Psoas muscle (tissue), 8 donors: ENCODE measurements at regions of chr10 and their contacts with region 1.

Region 1: DNA sequence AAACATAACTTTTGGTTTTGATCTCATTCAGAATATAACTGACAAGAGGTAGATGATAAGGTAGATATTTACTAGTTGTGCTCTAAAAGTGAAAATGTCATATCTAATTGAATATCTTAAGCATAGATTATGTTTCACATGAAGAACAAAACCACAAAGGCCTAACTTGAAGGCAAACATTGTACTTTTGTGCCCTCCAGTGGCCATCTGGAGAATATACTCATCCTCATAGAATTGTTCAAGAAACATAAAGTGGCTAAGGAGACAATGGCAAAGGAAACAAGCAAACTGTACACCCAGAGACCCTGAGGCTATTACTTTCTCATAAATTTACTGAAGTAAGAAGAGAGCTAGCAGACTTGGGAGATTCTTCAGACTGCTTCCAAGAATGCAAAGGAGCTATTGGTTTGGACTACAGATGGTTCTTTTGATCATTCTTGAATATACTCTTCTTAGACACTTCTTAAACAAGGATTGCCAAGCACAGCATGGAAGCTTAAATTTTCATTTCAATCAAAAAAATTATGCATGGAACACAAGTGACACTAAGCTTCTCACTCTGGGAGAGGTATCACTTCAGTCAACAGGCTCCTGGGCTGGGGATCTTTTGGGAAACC is 98.2 kb upstream of the DKK1 start:
- DNase-seq: no peak
- ATAC-seq: peak; percentile 66 to 85 (median 68)
- H3K4me3 ChIP-seq: no peak overlapping the region
- H3K27ac ChIP-seq: peak overlapping the region; percentile 79
- H3K4me1 ChIP-seq: peaks cover 45% of the 10 kb centered on the region
- H3K27me3 ChIP-seq: no peaks in the 10 kb centered on the region
- CTCF ChIP-seq: peak; percentile 87

Region 2: GRCh38 chr10:51063659-51064535 is 1152.0 kb before region 1 on chr10:
- intact Hi-C with region 1: loop called in 1 of 2 experiments (anchors 10 kb)
- DNase-seq: no peak
- ATAC-seq: peak in 3 of 4 donors; percentile 51 to 74 (median 51)
- H3K4me3 ChIP-seq: no peak overlapping the region
- H3K27ac ChIP-seq: no peak overlapping the region
- H3K4me1 ChIP-seq: no peaks in the 10 kb centered on the region
- H3K27me3 ChIP-seq: no peaks in the 10 kb centered on the region
- CTCF ChIP-seq: peak; percentile 71

Region 3: GRCh38 chr10:51699475-51700227 is 516.2 kb before region 1 on chr10 and contains the start of gene CSTF2T:
- intact Hi-C with region 1: loop called in 1 of 2 experiments (anchors 10 kb)
- DNase-seq: peak; percentile 84 to 91
- ATAC-seq: peak; percentile 92 to 95 (median 94)
- H3K4me3 ChIP-seq: peak within 1 kb of the TSS; percentile 94
- H3K27ac ChIP-seq: peak within 1 kb of the TSS; percentile 98
- H3K4me1 ChIP-seq: peaks cover 39% of the 10 kb centered on the region
- H3K27me3 ChIP-seq: no peaks in the 10 kb centered on the region
- CTCF ChIP-seq: no peak
- total RNA-seq, gene CSTF2T: 20.1 to 34.5 (median 21.8) TPM

Region 4: DNA sequence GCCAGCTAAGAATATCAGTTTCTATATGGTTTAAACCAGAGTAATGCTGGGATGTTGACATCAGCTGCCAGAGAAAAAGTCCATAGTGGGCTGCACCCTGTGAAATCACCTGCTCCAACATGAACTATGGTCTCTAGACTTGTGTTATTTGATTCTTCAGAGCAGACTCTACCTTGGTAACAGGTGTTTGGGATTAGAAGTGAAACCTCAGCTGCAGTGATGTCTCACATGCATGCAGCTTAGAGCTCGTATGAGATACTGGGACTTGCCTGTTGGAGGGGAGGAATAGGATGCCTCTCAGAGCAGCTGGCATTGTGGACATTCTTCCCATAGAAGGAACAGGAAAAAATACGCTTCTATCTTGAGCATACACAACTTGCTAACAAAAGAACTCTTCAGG is 229.3 kb before region 1 on chr10:
- intact Hi-C with region 1: loop called in 1 of 2 experiments (anchors 10 kb)
- DNase-seq: no peak
- ATAC-seq: peak; percentile 62 to 85 (median 67)
- H3K4me3 ChIP-seq: no peak overlapping the region
- H3K27ac ChIP-seq: peak overlapping the region; percentile 50
- H3K4me1 ChIP-seq: peaks cover 9% of the 10 kb centered on the region
- H3K27me3 ChIP-seq: no peaks in the 10 kb centered on the region
- CTCF ChIP-seq: no peak